ENCODE measurements at regions of chr15 and their contacts with region 1.

Region 1: DNA sequence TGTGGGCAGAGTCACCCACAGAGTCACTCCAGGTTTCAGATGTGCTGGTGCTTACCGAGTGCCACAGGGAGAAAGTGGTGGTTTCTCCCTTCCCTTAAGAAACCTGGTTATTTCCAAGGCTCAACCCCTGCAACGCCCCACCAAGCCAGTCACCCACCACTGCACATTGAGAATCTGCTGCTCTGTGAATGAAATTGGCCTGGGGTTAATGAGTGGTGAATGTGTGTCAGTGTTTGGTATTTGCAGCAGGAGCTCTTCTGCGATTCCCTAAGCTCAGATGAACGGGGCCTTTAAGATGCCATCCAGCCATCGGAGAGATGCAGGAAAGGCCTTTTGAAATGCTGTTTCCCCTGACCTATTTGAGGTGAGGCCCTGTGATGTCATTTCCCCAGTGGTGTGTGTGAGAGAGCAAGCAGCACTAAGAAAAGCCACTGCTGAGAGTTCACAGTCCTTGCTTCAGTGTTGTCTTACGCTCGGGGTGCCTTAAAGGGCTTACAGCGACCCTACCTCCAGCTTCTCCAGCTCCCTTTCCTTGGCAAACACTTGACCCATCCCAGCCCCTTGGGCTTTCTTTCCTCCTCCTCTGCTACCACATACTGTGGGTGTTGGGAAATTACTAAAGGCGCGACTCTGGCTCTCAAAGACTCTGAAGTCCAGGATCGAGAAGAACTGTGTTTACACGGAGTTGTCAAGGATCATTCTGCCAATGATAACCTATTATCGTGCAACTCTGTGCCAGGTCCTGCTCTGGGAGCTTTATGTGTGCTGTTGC is 68.9 kb downstream of the SMAD3 start:
- DNase-seq: peak; percentile 58
- ATAC-seq: peak; percentile 97
- H3K4me3 Mint-ChIP-seq: peak overlapping the region; percentile 86
- H3K27ac Mint-ChIP-seq: peak overlapping the region; percentile 98
- H3K4me1 Mint-ChIP-seq: peaks cover 58% of the 10 kb centered on the region
- H3K27me3 Mint-ChIP-seq: no peaks in the 10 kb centered on the region

Region 2: GRCh38 chr15:67085818-67086636 is 48.2 kb before region 1 on chr15:
- POLR2A ChIA-PET with region 1: interaction called, 11 read pairs
- DNase-seq: no peak
- ATAC-seq: peak; percentile 48
- H3K4me3 Mint-ChIP-seq: peak overlapping the region; percentile 55
- H3K27ac Mint-ChIP-seq: peak overlapping the region; percentile 67
- H3K4me1 Mint-ChIP-seq: peaks cover 90% of the 10 kb centered on the region
- H3K27me3 Mint-ChIP-seq: no peaks in the 10 kb centered on the region

Region 3: GRCh38 chr15:67120839-67121643 is 13.2 kb before region 1 on chr15:
- POLR2A ChIA-PET with region 1: interaction called, 20 read pairs
- DNase-seq: peak; percentile 76
- ATAC-seq: peak; percentile 86
- H3K4me3 Mint-ChIP-seq: peak overlapping the region; percentile 59
- H3K27ac Mint-ChIP-seq: peak overlapping the region; percentile 87
- H3K4me1 Mint-ChIP-seq: peaks cover 56% of the 10 kb centered on the region
- H3K27me3 Mint-ChIP-seq: no peaks in the 10 kb centered on the region

Measured in activated naive CD8-positive, alpha-beta T cell treated with anti-CD3 and anti-CD28 coated beads, Interleukin-2, amount 10 ng/mL, durations not matched to agents 7 days and 5 days (primary cell).